ENCODE measurements at regions of chr10 and their contacts with region 1.

Region 1: DNA sequence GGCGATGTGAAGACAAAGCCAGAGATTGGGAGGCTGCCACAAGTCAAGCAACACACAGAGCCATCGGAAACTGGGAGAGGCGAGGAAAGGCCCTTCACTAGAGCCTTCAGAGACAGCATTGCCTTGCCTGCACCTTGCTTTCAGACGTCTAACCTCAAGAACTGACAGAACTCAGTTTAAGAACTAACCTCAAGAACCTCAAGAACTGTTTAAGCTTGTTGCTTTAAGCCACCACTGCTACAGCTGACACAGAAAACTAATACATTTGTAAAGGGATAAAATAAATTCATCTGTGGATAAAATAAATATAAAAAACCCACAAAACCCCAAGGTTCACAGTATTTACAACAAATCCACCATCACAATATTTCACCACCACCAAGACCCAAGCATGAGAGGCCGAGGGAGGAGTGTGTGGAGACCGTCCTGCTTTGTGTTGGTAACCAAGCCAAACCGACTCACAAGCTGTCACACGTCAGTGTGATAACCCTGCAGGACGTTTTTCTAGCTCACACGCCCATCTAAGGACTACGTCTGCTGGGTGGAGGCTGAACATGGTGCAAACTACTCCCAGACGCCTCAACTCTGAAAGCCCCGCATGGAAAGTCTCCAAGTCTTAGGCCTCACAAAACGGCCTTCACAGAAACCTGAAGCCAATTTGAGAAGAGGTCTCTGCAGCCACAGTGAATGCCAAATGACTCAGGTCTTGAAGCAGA is 116.8 kb downstream of the ABLIM1 start:
- DNase-seq: peak; percentile 86
- H3K4me3 Mint-ChIP-seq: peak overlapping the region; percentile 51
- H3K27ac Mint-ChIP-seq: peak overlapping the region; percentile 96
- H3K4me1 Mint-ChIP-seq: peaks cover 77% of the 10 kb centered on the region
- H3K27me3 Mint-ChIP-seq: no peaks in the 10 kb centered on the region

Region 2: DNA sequence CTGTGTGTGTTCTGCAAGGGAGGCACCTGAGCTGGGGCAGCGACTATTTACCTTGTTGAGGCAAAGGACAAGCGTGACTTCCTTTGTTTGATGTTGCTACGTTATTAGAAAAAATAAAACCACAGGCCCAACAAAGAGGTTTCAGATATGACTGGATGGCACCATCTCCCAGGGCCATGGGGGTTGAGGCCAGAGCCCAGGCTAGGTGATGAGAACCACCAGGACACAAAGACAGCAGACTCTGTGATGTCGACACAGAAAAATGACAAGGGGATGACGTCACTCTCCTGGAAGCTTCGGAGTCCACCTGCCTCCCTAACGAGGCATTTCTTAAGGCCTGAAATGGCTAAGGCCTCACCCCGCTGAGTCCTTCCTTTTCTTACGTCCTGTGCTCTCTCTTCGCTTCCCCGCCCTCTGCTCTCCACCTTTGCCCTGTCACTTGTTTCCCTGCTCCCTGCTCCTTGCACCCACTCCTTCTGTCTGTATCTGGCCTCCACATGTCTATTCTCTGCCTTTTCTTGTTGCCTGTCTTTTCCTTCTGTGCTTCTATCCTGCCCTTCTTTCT is 580.5 kb before region 1 on chr10:
- CTCF ChIA-PET with region 1: no interaction called
- POLR2A ChIA-PET with region 1: no interaction called
- intact Hi-C with region 1: loop called (anchors 5 kb)
- DNase-seq: peak; percentile 62
- H3K4me3 Mint-ChIP-seq: no peak overlapping the region
- H3K27ac Mint-ChIP-seq: peak overlapping the region; percentile 70
- H3K4me1 Mint-ChIP-seq: peaks cover 43% of the 10 kb centered on the region
- H3K27me3 Mint-ChIP-seq: peaks cover 1% of the 10 kb centered on the region

Region 3: DNA sequence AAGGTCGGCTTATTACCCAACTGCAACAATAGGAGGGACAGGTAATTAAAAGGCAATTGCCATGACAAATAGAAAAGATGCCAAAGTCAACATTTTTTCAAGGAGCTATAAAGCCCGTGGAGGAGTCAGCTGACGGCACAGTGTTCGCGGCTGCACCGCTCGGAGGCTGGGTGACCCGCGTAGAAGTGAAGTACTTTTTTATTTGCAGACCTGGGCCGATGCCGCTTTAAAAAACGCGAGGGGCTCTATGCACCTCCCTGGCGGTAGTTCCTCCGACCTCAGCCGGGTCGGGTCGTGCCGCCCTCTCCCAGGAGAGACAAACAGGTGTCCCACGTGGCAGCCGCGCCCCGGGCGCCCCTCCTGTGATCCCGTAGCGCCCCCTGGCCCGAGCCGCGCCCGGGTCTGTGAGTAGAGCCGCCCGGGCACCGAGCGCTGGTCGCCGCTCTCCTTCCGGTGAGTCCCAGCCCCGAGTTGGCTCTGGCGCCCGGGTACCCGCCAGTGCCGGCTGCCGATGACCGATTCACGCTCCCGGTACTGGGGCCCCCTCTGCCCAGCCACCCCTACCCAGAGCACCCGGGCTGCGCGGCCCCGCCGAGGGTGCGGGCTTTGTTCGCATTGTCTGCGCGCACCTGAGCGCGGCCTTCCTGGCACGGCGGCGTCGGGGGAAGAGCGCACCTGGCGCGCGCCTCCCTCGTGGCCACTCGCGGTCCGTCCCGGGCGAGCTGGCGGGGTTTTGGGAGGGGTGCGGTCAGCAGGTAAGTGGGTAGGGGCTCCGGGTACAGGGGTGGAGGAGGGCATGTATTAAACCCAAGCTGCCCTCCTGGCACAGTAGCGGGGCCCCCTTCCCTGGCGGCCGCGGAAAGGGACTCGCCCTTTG is 301.9 kb before region 1 on chr10 and contains the start of gene VWA2:
- CTCF ChIA-PET with region 1: no interaction called
- POLR2A ChIA-PET with region 1: no interaction called
- intact Hi-C with region 1: no loop called
- DNase-seq: peak; percentile 41
- H3K4me3 Mint-ChIP-seq: no peak within 1 kb of the TSS
- H3K27ac Mint-ChIP-seq: no peak within 1 kb of the TSS
- H3K4me1 Mint-ChIP-seq: no peaks in the 10 kb centered on the region
- H3K27me3 Mint-ChIP-seq: peaks cover 52% of the 10 kb centered on the region
- total RNA-seq, gene VWA2: 0.07 TPM in 1 of 2 experiments, not detected in the other

Region 4: DNA sequence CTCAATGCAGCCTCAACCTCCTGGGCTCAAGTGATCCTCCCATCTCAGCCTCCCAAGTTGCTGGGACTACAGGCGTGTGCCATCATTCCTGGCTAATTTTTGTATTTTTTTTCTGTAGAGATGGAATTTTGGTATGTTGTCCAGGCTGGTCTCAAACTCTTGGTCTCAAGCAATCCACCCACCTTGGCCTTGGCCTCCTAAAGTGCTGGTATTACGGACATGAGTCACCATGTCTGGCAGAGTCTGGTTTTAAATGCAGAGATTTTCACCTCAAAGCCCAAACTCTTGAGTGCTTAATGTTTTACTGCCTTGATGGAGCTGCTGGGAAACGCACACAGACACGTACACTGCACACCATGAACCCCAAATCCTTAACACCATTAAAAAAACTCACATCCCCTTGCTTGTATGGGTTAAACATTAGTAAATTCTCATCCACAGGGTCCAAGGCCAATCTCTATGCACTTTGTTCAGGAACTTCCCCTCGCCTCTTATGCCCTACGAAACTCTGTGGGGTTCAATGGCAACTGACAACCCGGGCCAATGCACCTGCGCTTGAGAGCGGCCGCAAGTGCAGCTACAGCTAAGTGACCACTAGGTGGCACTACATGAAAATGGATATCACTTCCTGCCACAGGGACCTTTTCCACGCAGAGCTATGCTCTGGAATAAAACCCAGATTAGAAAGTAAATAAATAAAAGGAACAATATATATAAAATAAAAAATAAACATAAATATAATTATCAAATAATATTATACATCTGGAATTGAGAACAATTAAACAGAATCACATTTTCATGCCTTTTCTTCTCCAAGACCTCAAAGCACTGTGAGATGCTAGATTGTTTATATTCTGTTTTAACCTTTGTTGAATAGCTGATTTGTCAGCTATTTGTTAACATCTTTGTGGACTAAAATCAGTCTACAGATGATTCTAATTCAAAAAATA is 70.0 kb before region 1 on chr10:
- CTCF ChIA-PET with region 1: interaction called, 89 read pairs
- POLR2A ChIA-PET with region 1: interaction called, 3 read pairs
- intact Hi-C with region 1: loop called (anchors 1 kb)
- DNase-seq: peak; percentile 73
- H3K4me3 Mint-ChIP-seq: no peak overlapping the region
- H3K27ac Mint-ChIP-seq: no peak overlapping the region
- H3K4me1 Mint-ChIP-seq: peaks cover 10% of the 10 kb centered on the region
- H3K27me3 Mint-ChIP-seq: no peaks in the 10 kb centered on the region

Region 5: GRCh38 chr10:114499630-114500190 is 41.5 kb before region 1 on chr10:
- CTCF ChIA-PET with region 1: interaction called, 9 read pairs
- POLR2A ChIA-PET with region 1: interaction called, 13 read pairs
- intact Hi-C with region 1: loop called (anchors 1 kb)
- DNase-seq: peak; percentile 92
- H3K4me3 Mint-ChIP-seq: peak overlapping the region; percentile 63
- H3K27ac Mint-ChIP-seq: peak overlapping the region; percentile 89
- H3K4me1 Mint-ChIP-seq: peaks cover 89% of the 10 kb centered on the region
- H3K27me3 Mint-ChIP-seq: no peaks in the 10 kb centered on the region

Region 6: GRCh38 chr10:114615600-114616007 is 74.4 kb after region 1 on chr10:
- CTCF ChIA-PET with region 1: no interaction called
- POLR2A ChIA-PET with region 1: no interaction called
- intact Hi-C with region 1: loop called (anchors 1 kb)
- DNase-seq: peak; percentile 53
- H3K4me3 Mint-ChIP-seq: no peak overlapping the region
- H3K27ac Mint-ChIP-seq: no peak overlapping the region
- H3K4me1 Mint-ChIP-seq: peaks cover 9% of the 10 kb centered on the region
- H3K27me3 Mint-ChIP-seq: peaks cover 2% of the 10 kb centered on the region

Region 7: GRCh38 chr10:114937962-114938855 is 397.0 kb after region 1 on chr10 and contains the start of gene TRUB1:
- CTCF ChIA-PET with region 1: no interaction called
- POLR2A ChIA-PET with region 1: no interaction called
- intact Hi-C with region 1: loop called (anchors 5 kb)
- DNase-seq: peak; percentile 94
- H3K4me3 Mint-ChIP-seq: peak within 1 kb of the TSS; percentile 96
- H3K27ac Mint-ChIP-seq: peak within 1 kb of the TSS; percentile 80
- H3K4me1 Mint-ChIP-seq: peaks cover 28% of the 10 kb centered on the region
- H3K27me3 Mint-ChIP-seq: no peaks in the 10 kb centered on the region
- total RNA-seq, gene TRUB1: 13.4 to 16.2 TPM

Measured in activated CD4-positive, alpha-beta memory T cell treated with anti-CD3 and anti-CD28 coated beads for 36 hours (primary cell).